ENCODE measurements at regions of chr12 and their contacts with region 1.

Region 1: DNA sequence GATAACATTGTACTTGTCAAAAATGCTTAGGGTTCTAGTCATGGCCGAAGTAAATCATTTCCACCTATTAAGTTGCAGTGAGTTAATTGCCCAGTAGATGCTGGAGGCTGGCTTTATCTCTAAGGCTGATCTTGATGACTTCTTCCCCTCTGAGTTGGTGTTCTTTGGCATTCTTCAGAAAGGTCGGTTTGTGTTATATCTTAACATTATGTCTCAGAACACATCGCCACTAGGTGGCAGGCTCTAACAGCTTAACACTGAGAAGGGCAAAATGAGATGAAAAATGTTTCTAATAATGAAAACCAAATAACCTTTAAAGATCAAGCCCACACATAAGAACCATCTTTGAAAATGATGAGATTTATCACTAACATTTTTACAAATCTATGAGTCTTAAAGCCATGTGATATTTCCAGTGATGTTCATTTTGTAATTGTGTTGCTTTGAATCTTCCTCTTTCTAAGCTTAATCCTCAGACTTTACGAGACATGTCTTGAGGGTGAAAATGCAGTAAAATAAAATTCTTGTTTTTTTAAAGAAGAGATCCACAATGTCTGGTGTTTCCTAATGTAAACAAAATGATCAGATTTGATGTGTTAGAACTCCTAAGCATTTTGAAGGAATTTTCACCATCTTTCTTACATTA is 28.6 kb downstream of the SUDS3 start:
- DNase-seq: peak in 7 of 10 donors; percentile 19 to 85 (median 60)

Region 2: DNA sequence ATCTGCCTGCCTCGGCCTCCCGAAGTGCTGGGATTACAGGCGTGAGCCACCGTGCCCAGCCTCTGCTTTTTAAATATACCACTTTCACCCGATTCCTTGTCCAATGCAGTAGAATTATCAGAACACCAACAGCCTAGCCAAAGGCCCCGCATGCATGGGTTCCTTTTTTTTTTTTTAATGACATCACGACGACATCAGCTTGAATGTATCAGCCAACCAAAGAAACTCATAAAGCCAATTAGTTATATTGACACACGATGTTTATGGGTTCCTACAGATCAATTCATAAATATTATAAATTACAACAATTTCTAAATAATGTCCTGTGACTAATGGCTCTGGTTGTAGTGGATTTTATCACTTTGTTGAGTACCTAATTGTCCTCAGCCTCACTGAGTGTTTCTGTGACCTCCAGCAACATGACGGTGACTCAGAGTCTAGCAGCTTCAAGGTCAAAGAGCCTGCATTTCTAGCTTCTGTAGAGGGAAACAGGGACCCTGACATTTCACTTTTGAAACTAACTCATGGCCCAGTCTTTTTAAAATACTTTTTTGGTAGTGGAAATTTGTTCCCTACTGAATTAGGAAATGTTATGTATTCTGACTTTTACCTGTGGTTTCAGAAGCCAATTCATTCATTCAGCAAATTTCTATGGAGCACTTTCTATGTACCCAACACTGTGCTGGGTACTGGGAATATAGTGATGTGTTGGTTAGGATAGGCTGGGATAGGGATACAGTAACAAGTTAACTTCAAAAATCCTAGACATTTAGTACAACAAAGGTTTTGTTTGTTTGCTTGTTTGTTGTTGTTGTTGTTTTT is 115.4 kb after region 1 on chr12:
- intact Hi-C with region 1: no loop called
- DNase-seq: no peak

Region 3: GRCh38 chr12:118827606-118828005 is 422.6 kb after region 1 on chr12:
- intact Hi-C with region 1: loop called (anchors 5 kb)
- DNase-seq: no peak

Region 4: GRCh38 chr12:118850244-118850825 is 445.3 kb after region 1 on chr12:
- intact Hi-C with region 1: loop called (anchors 10 kb)
- DNase-seq: no peak

Region 5: GRCh38 chr12:119036878-119037825 is 632.2 kb after region 1 on chr12:
- intact Hi-C with region 1: loop called (anchors 1 kb)
- DNase-seq: peak in 3 of 10 donors; percentile 24 to 43 (median 31)

Region 6: DNA sequence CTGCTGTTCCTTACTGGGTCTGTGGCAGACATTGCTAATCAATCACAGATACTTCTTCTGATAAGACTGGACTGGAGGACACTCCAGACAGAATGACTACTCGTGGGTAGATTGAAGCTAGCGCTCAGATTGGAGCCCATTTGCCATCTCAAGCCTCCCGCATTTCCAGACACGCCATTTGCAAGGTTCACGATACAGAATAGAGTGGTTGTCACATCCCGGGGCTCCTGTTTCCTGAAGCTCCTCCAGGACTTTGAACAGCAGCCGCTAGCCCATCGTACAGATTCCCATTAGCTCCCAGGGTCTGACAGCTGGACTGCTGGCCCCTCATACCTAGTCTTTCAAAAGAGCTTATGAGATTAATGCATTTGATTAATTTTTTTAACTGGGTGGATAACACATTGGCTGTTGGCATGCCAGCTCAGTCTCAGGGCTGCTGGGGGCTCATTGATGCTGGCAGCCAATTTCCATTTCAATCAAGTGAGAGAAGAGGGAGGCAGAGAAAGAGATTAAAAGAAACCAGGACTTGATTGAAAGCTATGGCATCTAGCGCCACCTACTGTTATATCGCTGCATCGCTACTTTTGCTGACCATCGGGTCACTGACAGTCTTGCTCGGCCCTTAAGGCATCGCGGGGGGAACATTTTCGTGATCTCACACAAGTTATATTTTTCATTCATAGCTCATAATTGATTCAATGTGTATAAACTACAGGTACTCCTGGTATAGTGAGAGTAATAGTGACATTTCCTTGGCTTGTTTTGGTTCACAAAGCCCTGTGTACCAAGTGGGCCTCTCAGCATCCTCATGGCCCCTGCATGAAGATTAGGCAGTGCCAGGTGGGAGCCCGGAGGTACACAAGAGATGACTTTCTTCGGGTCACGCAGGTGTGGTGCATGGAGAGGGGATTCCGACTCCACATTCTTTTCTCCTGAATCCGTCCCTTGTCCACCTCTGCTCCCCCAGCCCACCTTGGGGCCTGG is 1008.1 kb after region 1 on chr12:
- intact Hi-C with region 1: loop called (anchors 2 kb)
- DNase-seq: peak; percentile 37 to 94 (median 76)